Activated naive CD4-positive, alpha-beta T cell treated with anti-CD3 and anti-CD28 coated beads, Interleukin-2, amount 10 ng/mL, durations not matched to agents 7 days and 5 days (primary cell): ENCODE measurements at regions of chr11 and their contacts with region 1.

Region 1: DNA sequence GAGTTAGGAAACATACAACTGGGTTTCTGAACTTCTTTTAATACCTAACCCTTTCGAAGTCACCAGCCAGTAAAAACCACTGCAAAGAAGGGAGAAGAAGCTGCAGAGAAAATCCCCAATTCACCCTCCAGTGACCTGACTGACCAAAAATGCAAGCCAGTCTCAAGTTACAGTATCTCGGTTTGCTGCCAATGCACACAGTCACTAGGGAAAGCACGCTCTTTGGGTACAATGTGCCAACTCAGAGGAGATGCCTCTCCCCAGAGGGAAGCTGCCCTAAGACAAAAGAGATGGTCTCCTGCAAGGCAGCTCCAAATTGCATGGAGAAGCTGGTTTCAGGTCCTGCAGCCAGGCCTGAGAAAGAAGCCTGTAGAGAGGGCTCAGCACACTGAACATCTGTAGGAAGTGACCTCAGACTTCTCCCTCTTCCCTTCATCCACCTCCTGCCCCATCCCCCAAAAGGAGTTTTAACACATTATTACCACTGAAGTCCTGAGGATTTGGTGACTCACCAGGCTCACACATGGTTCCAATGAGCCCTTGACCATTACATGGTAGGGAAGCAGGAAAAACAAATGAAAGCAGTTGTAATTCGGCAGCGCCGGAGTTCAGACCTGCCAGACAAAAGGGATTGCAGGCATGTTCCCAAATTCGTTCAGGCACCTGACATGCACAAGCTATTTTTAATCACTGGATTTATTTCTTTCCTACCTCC is 90.1 kb downstream of the ETS1 start:
- DNase-seq: no peak
- H3K4me3 Mint-ChIP-seq: peak overlapping the region; percentile 69
- H3K27ac Mint-ChIP-seq: peak overlapping the region; percentile 91
- H3K4me1 Mint-ChIP-seq: peaks cover 97% of the 10 kb centered on the region
- H3K27me3 Mint-ChIP-seq: no peaks in the 10 kb centered on the region

Region 2: GRCh38 chr11:128421577-128421976 is 75.6 kb before region 1 on chr11:
- CTCF ChIA-PET with region 1: no interaction called
- DNase-seq: no peak
- H3K4me3 Mint-ChIP-seq: no peak overlapping the region
- H3K27ac Mint-ChIP-seq: no peak overlapping the region
- H3K4me1 Mint-ChIP-seq: peaks cover 21% of the 10 kb centered on the region
- H3K27me3 Mint-ChIP-seq: no peaks in the 10 kb centered on the region

Region 3: GRCh38 chr11:128482512-128483191 is 14.6 kb before region 1 on chr11:
- CTCF ChIA-PET with region 1: interaction called, 10 read pairs
- DNase-seq: peak; percentile 60
- H3K4me3 Mint-ChIP-seq: peak overlapping the region; percentile 77
- H3K27ac Mint-ChIP-seq: peak overlapping the region; percentile 92
- H3K4me1 Mint-ChIP-seq: peaks cover 98% of the 10 kb centered on the region
- H3K27me3 Mint-ChIP-seq: no peaks in the 10 kb centered on the region

Region 4: GRCh38 chr11:128512474-128512996 is 15.3 kb after region 1 on chr11:
- CTCF ChIA-PET with region 1: interaction called, 14 read pairs
- DNase-seq: peak; percentile 67
- H3K4me3 Mint-ChIP-seq: peak overlapping the region; percentile 96
- H3K27ac Mint-ChIP-seq: peak overlapping the region; percentile 100
- H3K4me1 Mint-ChIP-seq: peaks cover 95% of the 10 kb centered on the region
- H3K27me3 Mint-ChIP-seq: no peaks in the 10 kb centered on the region

Region 5: GRCh38 chr11:128525411-128526243 is 28.4 kb after region 1 on chr11:
- CTCF ChIA-PET with region 1: interaction called, 13 read pairs
- DNase-seq: peak; percentile 58
- H3K4me3 Mint-ChIP-seq: peak overlapping the region; percentile 59
- H3K27ac Mint-ChIP-seq: peak overlapping the region; percentile 100
- H3K4me1 Mint-ChIP-seq: peaks cover 71% of the 10 kb centered on the region
- H3K27me3 Mint-ChIP-seq: no peaks in the 10 kb centered on the region